Activated T-helper 2 cell treated with anti-CD3 and anti-CD28 coated beads, Interferon-gamma antibody, Interleukin-2, Interleukin-4, amounts not matched to agents 10 μg/mL and 5 μg/mL and 100 μg/mL, durations not matched to agents 14 hours and 24 hours and 36 hours (primary cell): ENCODE measurements at regions of chr4 and their contacts with region 1.

Region 1: DNA sequence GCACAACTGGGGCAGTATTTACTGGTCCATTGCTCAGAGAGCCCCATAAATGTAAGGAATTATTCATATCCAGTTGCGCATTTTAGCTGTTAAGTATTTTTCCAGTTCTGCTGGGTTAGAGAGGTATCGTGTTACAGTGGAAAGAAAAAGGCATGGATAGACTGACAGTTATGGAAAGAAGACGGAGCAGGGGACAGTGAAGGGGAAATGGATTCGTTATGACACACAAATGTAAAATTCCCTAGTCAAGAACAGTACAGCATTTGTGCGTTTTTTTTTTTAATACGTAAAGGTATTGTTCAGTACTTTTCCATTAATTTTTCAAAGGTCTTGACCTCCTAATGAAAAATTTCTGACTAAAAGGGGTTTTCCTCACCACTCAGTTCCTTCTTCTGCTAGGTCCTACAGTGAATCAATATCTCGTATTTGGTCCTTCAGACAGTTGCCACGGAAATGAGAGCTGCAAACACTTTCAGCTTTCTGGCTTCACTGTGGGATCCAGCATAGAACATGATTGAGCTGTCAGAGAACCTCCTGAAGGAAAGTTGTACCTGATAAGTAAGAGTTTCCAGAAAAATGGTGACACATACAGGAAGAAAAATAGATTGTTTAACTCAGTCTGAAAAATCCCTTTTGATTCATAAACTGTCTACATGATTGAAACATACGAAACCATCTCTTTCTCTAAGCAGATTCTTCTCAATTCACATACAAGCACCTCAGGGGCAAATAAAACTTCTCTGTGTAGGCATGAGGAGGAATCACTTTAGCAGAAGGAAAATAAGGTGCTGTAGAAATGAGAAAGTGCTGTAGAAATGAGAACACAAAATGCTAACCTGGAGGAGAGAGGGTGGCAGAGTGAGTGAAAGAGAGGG is 21.8 kb upstream of the BBS12 start:
- DNase-seq: no peak
- H3K4me3 Mint-ChIP-seq: peak overlapping the region; percentile 62
- H3K27ac Mint-ChIP-seq: peak overlapping the region; percentile 93
- H3K4me1 Mint-ChIP-seq: peaks cover 69% of the 10 kb centered on the region
- H3K27me3 Mint-ChIP-seq: no peaks in the 10 kb centered on the region

Region 2: GRCh38 chr4:122508083-122508482 is 202.6 kb before region 1 on chr4:
- intact Hi-C with region 1: loop called (anchors 5 kb)
- DNase-seq: no peak
- H3K4me3 Mint-ChIP-seq: peak overlapping the region; percentile 54
- H3K27ac Mint-ChIP-seq: peak overlapping the region; percentile 78
- H3K4me1 Mint-ChIP-seq: peaks cover 57% of the 10 kb centered on the region
- H3K27me3 Mint-ChIP-seq: peaks cover 22% of the 10 kb centered on the region

Region 3: GRCh38 chr4:122555216-122555615 is 155.5 kb before region 1 on chr4:
- intact Hi-C with region 1: no loop called
- DNase-seq: no peak
- H3K4me3 Mint-ChIP-seq: no peak overlapping the region
- H3K27ac Mint-ChIP-seq: no peak overlapping the region
- H3K4me1 Mint-ChIP-seq: peaks cover 27% of the 10 kb centered on the region
- H3K27me3 Mint-ChIP-seq: no peaks in the 10 kb centered on the region

Region 4: GRCh38 chr4:122666527-122667245 is 44.0 kb before region 1 on chr4:
- intact Hi-C with region 1: loop called (anchors 1 kb)
- DNase-seq: no peak
- H3K4me3 Mint-ChIP-seq: peak overlapping the region; percentile 60
- H3K27ac Mint-ChIP-seq: peak overlapping the region; percentile 78
- H3K4me1 Mint-ChIP-seq: peaks cover 70% of the 10 kb centered on the region
- H3K27me3 Mint-ChIP-seq: no peaks in the 10 kb centered on the region

Region 5: DNA sequence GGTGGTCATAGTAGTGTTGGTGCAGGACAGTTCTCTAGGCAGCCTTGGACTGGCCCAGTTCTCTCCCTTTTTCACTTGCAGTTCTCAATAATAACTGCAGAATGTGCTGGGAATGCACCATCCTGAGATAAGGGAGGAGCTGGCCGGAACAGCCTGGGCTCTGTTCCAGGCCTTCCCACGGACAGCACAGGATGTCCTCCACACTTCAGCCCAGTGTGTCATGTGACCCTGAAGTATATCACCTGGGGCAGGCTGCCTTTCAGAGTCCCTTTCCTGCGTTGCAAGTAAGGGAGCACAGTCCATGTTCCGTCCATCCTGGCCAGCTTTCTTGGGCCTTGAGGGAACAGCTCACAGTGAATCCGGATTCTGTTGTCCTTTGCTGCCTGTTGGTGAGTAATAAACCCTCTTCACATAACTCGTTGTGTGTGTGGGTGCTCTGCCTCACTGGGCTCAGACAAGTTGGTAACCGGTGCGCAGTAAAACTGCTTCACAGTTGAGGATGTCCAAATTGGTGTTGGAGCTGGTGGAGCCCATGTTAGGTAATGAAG is 10.4 kb before region 1 on chr4:
- intact Hi-C with region 1: loop called (anchors 1 kb)
- DNase-seq: no peak
- H3K4me3 Mint-ChIP-seq: peak overlapping the region; percentile 78
- H3K27ac Mint-ChIP-seq: peak overlapping the region; percentile 79
- H3K4me1 Mint-ChIP-seq: peaks cover 51% of the 10 kb centered on the region
- H3K27me3 Mint-ChIP-seq: peaks cover 11% of the 10 kb centered on the region

Region 6: GRCh38 chr4:122814426-122814825 is 103.8 kb after region 1 on chr4:
- intact Hi-C with region 1: loop called (anchors 5 kb)
- DNase-seq: no peak
- H3K4me3 Mint-ChIP-seq: no peak overlapping the region
- H3K27ac Mint-ChIP-seq: no peak overlapping the region
- H3K4me1 Mint-ChIP-seq: peaks cover 9% of the 10 kb centered on the region
- H3K27me3 Mint-ChIP-seq: peaks cover 23% of the 10 kb centered on the region